Cardiac septum (tissue), 1 donor: ENCODE measurements at regions of chr17 and their contacts with region 1.

Region 1: DNA sequence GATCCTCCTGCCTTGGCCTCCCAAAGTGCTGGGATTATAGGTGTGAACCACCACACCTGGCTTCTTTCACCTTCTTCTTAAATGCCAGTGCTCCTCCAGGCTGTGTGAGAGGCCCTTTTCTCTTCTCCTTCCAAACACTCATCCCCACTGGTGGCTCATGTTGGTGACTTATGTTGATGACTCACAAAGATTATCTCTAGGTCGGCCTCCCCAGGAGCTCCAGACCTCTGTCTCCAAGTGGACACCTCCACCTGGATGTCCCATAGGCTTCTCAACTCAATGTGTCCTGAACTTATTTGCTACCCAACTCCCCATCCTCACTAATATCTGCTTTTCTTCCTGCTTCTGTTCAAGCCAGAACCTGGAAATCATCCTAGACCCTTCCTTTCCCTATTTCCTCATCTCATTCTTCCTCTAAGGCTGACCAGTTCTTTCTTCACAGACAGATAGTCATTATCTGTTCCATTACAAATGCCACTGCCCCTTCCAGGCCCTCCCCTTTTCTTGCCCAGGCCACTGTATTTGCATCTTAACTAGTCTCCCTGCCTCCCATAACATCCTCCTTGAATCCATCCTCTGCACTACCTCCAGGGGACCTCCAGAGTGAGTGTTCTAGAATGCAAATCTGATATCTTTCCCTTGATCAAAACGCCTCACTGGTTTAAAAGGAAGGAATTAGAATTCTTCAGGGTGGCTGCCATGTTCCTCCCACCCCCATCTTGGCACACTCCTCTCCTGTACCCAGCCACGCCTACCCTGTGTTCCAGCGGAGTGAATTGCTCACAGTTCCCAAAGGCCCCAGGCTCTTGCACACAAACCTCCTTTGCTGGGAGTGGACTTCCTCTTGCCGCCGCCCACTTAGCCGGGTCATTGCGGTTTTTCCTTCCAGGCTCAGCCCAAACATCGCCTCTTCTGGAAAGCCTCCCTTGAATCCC is 34.8 kb upstream of the FBXO47 start:
- DNase-seq: peak; percentile 91

Region 2: GRCh38 chr17:39064374-39064773 is 62.4 kb after region 1 on chr17:
- intact Hi-C with region 1: loop called (anchors 2 kb)
- DNase-seq: no peak

Region 3: GRCh38 chr17:39080421-39081078 is 78.6 kb after region 1 on chr17:
- intact Hi-C with region 1: loop called (anchors 2 kb)
- DNase-seq: no peak